ENCODE measurements at regions of chr17 and their contacts with region 1.

Region 1: GRCh38 chr17:66203274-66204015 is 11.5 kb upstream of the CEP112 start:
- DNase-seq: no peak
- H3K4me3 ChIP-seq: no peak overlapping the region
- H3K27ac ChIP-seq: no peak overlapping the region
- H3K4me1 ChIP-seq: peaks cover 0 to 3% (median 0%) of the 10 kb centered on the region in 4 experiments
- H3K27me3 ChIP-seq: no peaks in the 10 kb centered on the region

Region 2: DNA sequence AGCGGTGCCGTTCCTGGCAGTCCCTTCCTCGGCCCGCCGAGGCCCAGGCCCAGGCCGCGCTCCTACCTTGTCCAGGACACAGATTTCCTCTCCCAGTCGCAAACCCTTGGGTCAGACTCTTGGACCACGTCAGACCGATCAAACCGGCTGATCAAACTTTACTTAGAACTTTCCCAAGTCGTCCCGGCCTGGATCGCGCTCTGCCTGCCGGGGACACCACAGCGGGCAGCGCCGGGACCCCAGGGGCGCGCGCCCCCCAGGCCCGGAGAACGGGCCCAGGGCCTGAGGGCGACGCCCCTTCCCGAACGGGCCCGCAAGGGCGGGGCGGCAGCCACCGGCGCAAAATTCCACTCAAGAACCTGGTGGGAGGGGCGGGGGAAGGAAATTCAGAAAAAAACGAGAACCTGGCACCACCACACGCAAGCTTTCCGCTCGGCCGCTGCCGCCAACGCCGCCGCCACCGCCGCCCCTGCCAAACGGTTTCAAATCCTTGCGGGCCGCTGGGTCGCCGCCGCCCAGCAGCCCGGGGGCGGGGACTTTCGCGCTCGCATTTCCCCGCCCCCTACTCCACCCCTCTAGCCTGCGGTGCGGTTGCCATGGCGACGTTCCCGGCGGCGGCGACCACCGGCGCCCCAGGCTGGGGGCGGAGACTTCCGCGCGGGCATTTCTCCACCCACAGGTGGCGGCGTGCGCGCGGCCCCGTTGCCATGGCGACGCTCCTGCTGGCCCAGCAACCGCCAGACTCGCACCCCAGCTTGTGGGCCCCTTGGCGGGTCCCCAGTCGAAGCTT is 11.7 kb before region 1 on chr17 and contains the start of gene CEP112:
- CTCF ChIA-PET with region 1: interaction called, 11 read pairs
- POLR2A ChIA-PET with region 1: no interaction called
- DNase-seq: peak; percentile 90 to 95 (median 93)
- H3K4me3 ChIP-seq: peak within 1 kb of the TSS; percentile 53 to 87 (median 78)
- H3K27ac ChIP-seq: peak within 1 kb of the TSS in 1 of 2 experiments; percentile 71
- H3K4me1 ChIP-seq: peaks cover 0 to 19% (median 17%) of the 10 kb centered on the region in 4 experiments
- H3K27me3 ChIP-seq: no peaks in the 10 kb centered on the region

Measured in common myeloid progenitor, CD34-positive (primary cell).